ENCODE measurements at regions of chr13 and their contacts with region 1.

Region 1: DNA sequence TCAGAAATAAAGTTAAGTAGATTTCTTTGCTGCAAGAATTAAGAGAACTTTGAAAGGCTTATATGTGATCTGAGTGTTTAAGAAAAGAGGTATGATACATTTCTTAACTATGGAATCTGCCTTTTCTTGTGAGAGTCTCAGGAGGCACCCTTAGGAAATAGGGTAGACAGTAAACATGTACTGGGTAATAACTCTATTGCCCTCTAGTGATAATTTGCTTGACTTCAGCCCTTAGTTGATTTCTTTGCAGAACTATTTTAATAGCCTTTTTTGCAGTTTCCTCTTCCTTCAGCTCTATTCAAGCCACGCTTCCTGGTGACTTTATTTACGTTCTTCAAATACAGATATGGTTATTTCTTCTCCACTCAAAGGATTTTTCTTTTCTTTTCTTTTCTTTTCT is 37.0 kb upstream of the CCNA1 start:
- DNase-seq: no peak
- ATAC-seq: peak in 1 of 2 donors; percentile 42
- H3K4me3 ChIP-seq: no peak overlapping the region
- H3K27ac ChIP-seq: no peak overlapping the region
- H3K4me1 ChIP-seq: no peaks in the 10 kb centered on the region
- H3K27me3 ChIP-seq: no peaks in the 10 kb centered on the region
- CTCF ChIP-seq: peak in 1 of 5 experiments; percentile 35
- POLR2A ChIP-seq: no peak

Region 2: GRCh38 chr13:36297366-36298338 is 97.6 kb before region 1 on chr13 and contains the start of gene CCDC169:
- in situ Hi-C with region 1: loop called in 1 of 4 experiments (anchors 25 kb)
- intact Hi-C with region 1: no loop called
- DNase-seq: peak; percentile 40 to 64
- ATAC-seq: peak; percentile 72 to 84
- H3K4me3 ChIP-seq: peak within 1 kb of the TSS; percentile 72 to 87 (median 78)
- H3K27ac ChIP-seq: peak within 1 kb of the TSS; percentile 60 to 72 (median 68)
- H3K4me1 ChIP-seq: peaks cover 13 to 15% of the 10 kb centered on the region in 2 donors
- H3K27me3 ChIP-seq: no peaks in the 10 kb centered on the region
- CTCF ChIP-seq: no peak
- POLR2A ChIP-seq: peak; percentile 20 to 23
- total RNA-seq, gene CCDC169: 0.10 to 1.7 TPM in 2 of 4 donors, not detected in the others

Measured in gastrocnemius medialis (tissue), 4 donors.